ENCODE measurements at regions of chr11 and their contacts with region 1.

Region 1: DNA sequence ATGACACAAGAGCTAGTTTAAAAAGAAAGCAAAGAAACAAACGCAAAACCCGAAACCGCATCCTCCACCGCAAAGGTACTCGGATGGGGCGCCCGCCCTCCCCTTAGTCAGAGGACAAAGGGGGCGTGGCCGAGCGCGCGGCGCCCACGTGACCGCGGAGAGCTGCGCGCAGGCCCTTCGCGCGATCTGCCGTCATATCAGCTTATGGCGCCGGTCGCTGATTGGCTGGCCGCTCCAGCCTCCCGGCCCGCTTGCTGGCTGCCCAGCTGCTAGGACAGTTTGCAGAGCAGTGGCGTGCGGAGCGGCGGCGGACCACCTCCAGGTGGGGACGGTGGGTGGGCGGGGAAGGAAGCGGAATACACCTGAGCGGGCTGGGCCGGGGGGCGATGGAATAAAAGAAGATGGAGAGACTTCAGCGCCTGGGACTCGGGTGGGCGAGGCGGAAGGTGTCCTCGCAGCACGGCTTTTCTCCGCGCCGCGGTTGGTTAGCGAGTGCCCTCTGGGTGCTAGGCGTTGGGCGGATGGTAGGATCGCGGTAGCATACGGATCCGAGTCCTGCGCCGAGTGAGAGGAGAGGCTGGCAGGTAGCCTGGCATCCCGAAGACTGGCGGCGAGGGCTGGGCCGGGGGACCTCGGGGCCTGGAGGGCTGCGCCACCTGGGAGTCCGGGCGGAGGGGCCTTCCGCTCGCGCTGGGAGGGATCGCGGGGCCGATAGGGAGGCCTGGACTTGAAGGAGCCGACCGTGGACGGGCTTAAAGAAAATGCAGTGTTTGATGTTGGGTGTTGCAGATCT is at the start of gene SC5D:
- DNase-seq: peak; percentile 94 to 96 (median 95)
- H3K4me3 ChIP-seq: peak within 1 kb of the TSS; percentile 70 to 86
- H3K4me3 Mint-ChIP-seq: peak within 1 kb of the TSS; percentile 90 to 98 (median 96)
- H3K27ac ChIP-seq: peak within 1 kb of the TSS; percentile 86
- H3K27ac Mint-ChIP-seq: peak within 1 kb of the TSS; percentile 98 to 100 (median 99)
- H3K4me1 ChIP-seq: peaks cover 20% of the 10 kb centered on the region
- H3K4me1 Mint-ChIP-seq: peaks cover 36 to 52% (median 43%) of the 10 kb centered on the region in 4 donors
- H3K27me3 ChIP-seq: no peaks in the 10 kb centered on the region
- H3K27me3 Mint-ChIP-seq: peaks cover 0 to 2% of the 10 kb centered on the region in 2 donors
- total RNA-seq, gene SC5D: 27.4 to 28.7 TPM

Region 2: GRCh38 chr11:121236115-121237001 is 56.3 kb before region 1 on chr11:
- CTCF ChIA-PET with region 1: no interaction called
- POLR2A ChIA-PET with region 1: no interaction called
- intact Hi-C with region 1: no loop called
- DNase-seq: no peak
- H3K4me3 ChIP-seq: no peak overlapping the region
- H3K4me3 Mint-ChIP-seq: peak overlapping the region in 7 of 8 donors; percentile 37 to 85 (median 72)
- H3K27ac ChIP-seq: no peak overlapping the region
- H3K27ac Mint-ChIP-seq: no peak overlapping the region
- H3K4me1 ChIP-seq: peaks cover 5% of the 10 kb centered on the region
- H3K4me1 Mint-ChIP-seq: peaks cover 5 to 14% (median 9%) of the 10 kb centered on the region in 4 donors
- H3K27me3 ChIP-seq: peaks cover 10% of the 10 kb centered on the region
- H3K27me3 Mint-ChIP-seq: peaks cover 19 to 29% of the 10 kb centered on the region in 2 donors

Region 3: GRCh38 chr11:121249039-121249663 is 43.5 kb before region 1 on chr11:
- CTCF ChIA-PET with region 1: interaction called, 7 read pairs
- POLR2A ChIA-PET with region 1: interaction called, 6 read pairs
- intact Hi-C with region 1: loop called (anchors 1 kb)
- DNase-seq: peak; percentile 30 to 43 (median 35)
- H3K4me3 ChIP-seq: no peak overlapping the region
- H3K4me3 Mint-ChIP-seq: no peak overlapping the region
- H3K27ac ChIP-seq: no peak overlapping the region
- H3K27ac Mint-ChIP-seq: peak overlapping the region in 2 of 7 donors; percentile 0 to 18
- H3K4me1 ChIP-seq: no peaks in the 10 kb centered on the region
- H3K4me1 Mint-ChIP-seq: peaks cover 0 to 4% (median 1%) of the 10 kb centered on the region in 4 donors
- H3K27me3 ChIP-seq: no peaks in the 10 kb centered on the region
- H3K27me3 Mint-ChIP-seq: peaks cover 8% of the 10 kb centered on the region in 2 donors

Region 4: GRCh38 chr11:121270001-121270678 is 22.6 kb before region 1 on chr11:
- CTCF ChIA-PET with region 1: no interaction called
- POLR2A ChIA-PET with region 1: no interaction called
- intact Hi-C with region 1: no loop called
- DNase-seq: peak in 1 of 5 donors; percentile 16
- H3K4me3 ChIP-seq: no peak overlapping the region
- H3K4me3 Mint-ChIP-seq: no peak overlapping the region
- H3K27ac ChIP-seq: no peak overlapping the region
- H3K27ac Mint-ChIP-seq: no peak overlapping the region
- H3K4me1 ChIP-seq: no peaks in the 10 kb centered on the region
- H3K4me1 Mint-ChIP-seq: peaks cover 2 to 5% (median 5%) of the 10 kb centered on the region in 4 donors
- H3K27me3 ChIP-seq: peaks cover 4% of the 10 kb centered on the region
- H3K27me3 Mint-ChIP-seq: peaks cover 26 to 44% of the 10 kb centered on the region in 2 donors

Measured in CD4-positive, alpha-beta memory T cell (primary cell).